Heart right ventricle (tissue), 16 donors: ENCODE measurements at regions of chr9 and their contacts with region 1.

Region 1: DNA sequence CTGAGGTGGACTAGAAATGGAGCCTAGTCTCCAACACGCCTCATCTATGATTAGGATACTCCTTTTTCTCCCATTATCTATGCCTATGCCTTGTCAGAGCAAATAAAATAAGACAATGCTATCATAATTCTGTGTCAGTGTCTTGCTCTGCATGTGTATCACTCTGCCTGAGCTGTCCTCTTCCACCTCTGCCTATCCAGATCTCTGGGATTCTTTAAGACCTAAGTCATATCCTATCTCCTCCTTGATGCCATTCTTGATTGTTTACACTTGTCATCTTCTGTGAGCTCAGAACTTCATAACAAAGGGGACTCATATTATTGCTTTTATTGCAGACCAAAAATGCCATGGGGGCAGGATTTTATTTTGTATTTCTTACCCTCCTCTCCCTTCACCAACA is 351.2 kb upstream of the C9orf72 start:
- DNase-seq: no peak
- ATAC-seq: no peak
- H3K4me3 ChIP-seq: no peak overlapping the region
- H3K27ac ChIP-seq: no peak overlapping the region
- H3K4me1 ChIP-seq: no peaks in the 10 kb centered on the region
- H3K27me3 ChIP-seq: no peaks in the 10 kb centered on the region
- CTCF ChIP-seq: no peak

Region 2: GRCh38 chr9:27856054-27856453 is 68.4 kb before region 1 on chr9:
- intact Hi-C with region 1: loop called in 1 of 10 experiments (anchors 10 kb)
- DNase-seq: no peak
- ATAC-seq: no peak
- H3K4me3 ChIP-seq: no peak overlapping the region
- H3K27ac ChIP-seq: no peak overlapping the region
- H3K4me1 ChIP-seq: no peaks in the 10 kb centered on the region
- H3K27me3 ChIP-seq: peaks cover 0 to 4% (median 0%) of the 10 kb centered on the region in 7 donors
- CTCF ChIP-seq: no peak